Activated CD4-positive, alpha-beta memory T cell treated with anti-CD3 and anti-CD28 coated beads, Interleukin-2, amount 10 ng/mL, durations not matched to agents 7 days and 5 days (primary cell): ENCODE measurements at regions of chr3 and their contacts with region 1.

Region 1: DNA sequence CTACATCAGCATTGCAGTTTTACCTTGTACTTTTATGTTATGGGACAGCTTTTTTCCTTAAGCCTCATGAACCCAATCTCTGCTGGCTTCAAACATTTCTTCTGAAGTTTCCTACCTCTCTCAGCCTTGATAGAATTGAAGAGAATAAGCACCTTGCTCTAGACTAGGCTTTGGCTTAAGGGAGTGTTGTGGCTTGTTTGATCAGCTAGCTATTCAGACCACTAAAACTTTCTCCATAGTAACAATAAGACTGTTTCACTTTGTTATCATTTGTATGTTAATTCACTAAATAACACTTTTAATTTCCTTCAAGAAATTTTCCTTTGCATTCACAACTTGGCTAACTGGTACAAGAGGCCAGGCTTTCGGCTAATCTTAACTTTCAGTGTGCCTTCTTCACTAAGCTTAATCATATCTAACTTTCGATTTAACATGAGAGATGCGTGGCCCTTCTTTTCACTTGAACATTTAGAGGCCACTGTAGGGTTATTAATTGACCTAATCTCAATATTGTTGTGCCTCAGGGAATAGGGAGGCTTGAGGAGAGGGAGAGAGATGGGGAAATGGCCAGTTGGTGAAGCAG is 8.1 kb upstream of the TIGIT start:
- DNase-seq: no peak
- H3K4me3 Mint-ChIP-seq: peak overlapping the region; percentile 54
- H3K27ac Mint-ChIP-seq: peak overlapping the region; percentile 69
- H3K4me1 Mint-ChIP-seq: peaks cover 21% of the 10 kb centered on the region
- H3K27me3 Mint-ChIP-seq: no peaks in the 10 kb centered on the region

Region 2: GRCh38 chr3:114308830-114309229 is 23.1 kb after region 1 on chr3:
- CTCF ChIA-PET with region 1: interaction called, 51 read pairs
- POLR2A ChIA-PET with region 1: interaction called, 78 read pairs
- DNase-seq: peak; percentile 75
- H3K4me3 Mint-ChIP-seq: peak overlapping the region; percentile 51
- H3K27ac Mint-ChIP-seq: peak overlapping the region; percentile 90
- H3K4me1 Mint-ChIP-seq: peaks cover 52% of the 10 kb centered on the region
- H3K27me3 Mint-ChIP-seq: no peaks in the 10 kb centered on the region

Region 3: GRCh38 chr3:114551770-114552526 is 266.2 kb after region 1 on chr3:
- CTCF ChIA-PET with region 1: no interaction called
- POLR2A ChIA-PET with region 1: no interaction called
- DNase-seq: no peak
- H3K4me3 Mint-ChIP-seq: no peak overlapping the region
- H3K27ac Mint-ChIP-seq: no peak overlapping the region
- H3K4me1 Mint-ChIP-seq: no peaks in the 10 kb centered on the region
- H3K27me3 Mint-ChIP-seq: no peaks in the 10 kb centered on the region